A549 (cell line): ENCODE measurements at regions of chr10 and their contacts with region 1.

Region 1: DNA sequence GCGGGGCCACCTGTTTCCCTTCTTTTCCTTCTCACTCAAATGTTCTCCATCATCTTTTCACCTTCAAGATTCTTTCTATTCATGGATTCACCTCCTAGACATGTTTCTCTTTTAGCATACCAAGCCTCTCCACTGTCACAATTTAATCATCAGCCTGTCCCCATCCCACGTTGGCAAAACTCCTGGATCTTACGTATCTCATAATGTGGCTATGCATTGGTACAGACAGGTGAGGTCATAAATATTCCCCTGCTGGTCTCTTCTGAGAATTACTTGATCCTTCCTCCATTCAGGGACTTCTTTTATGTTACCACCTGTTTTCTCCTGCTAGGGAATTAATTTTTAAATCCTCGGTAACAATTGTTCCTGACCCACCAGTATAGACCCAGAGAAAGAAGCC is 262.6 kb upstream of the NEBL start:
- DNase-seq: no peak
- ATAC-seq: peak in 1 of 2 experiments; percentile 38; a peak in 1 of 6 replicates
- H3K4me3 ChIP-seq: no peak overlapping the region
- H3K27ac ChIP-seq: no peak overlapping the region
- H3K4me1 ChIP-seq: peaks cover 15% of the 10 kb centered on the region
- CTCF ChIP-seq: no peak
- EP300 ChIP-seq: no peak
- POLR2A ChIP-seq: no peak
- RAD21 ChIP-seq: no peak

Region 2: GRCh38 chr10:21055339-21056135 is 104.1 kb before region 1 on chr10:
- CTCF ChIA-PET with region 1: no interaction called
- POLR2A ChIA-PET with region 1: no interaction called
- DNase-seq: no peak
- ATAC-seq: no peak
- H3K4me3 ChIP-seq: no peak overlapping the region
- H3K27ac ChIP-seq: no peak overlapping the region
- H3K4me1 ChIP-seq: no peaks in the 10 kb centered on the region
- CTCF ChIP-seq: no peak
- EP300 ChIP-seq: no peak
- POLR2A ChIP-seq: no peak
- RAD21 ChIP-seq: no peak

Region 3: DNA sequence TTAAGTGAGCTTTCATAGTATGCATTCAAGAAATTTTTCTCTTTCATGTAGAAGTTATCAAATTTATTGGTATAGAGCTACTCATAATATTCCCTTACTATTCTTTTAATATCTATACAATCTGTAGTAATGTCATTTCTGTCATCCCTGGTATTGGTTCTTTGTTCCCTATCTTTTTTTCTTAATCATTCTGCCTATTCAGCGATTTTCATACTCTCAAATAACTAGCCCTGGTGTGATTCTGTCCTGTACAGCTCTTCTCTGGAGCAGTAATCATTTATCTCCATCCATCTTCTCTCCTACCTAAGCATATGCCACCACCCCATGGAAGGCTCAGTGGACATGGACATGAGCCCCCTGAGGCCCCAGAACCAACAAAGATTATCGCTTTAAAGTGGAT is 49.3 kb before region 1 on chr10:
- CTCF ChIA-PET with region 1: no interaction called
- POLR2A ChIA-PET with region 1: no interaction called
- DNase-seq: no peak
- ATAC-seq: no peak
- H3K4me3 ChIP-seq: no peak overlapping the region
- H3K27ac ChIP-seq: no peak overlapping the region
- H3K4me1 ChIP-seq: peaks cover 5% of the 10 kb centered on the region; the same call in 1 of the 3 replicates
- CTCF ChIP-seq: no peak
- EP300 ChIP-seq: no peak
- POLR2A ChIP-seq: no peak
- RAD21 ChIP-seq: no peak

Region 4: GRCh38 chr10:21173812-21174714 is 14.4 kb after region 1 on chr10:
- CTCF ChIA-PET with region 1: interaction called, 11 read pairs
- POLR2A ChIA-PET with region 1: no interaction called
- DNase-seq: peak; percentile 66 to 82
- ATAC-seq: peak; percentile 80 to 86
- H3K4me3 ChIP-seq: peak overlapping the region; percentile 79
- H3K27ac ChIP-seq: peak overlapping the region; percentile 92 to 94
- H3K4me1 ChIP-seq: peaks cover 29% of the 10 kb centered on the region
- CTCF ChIP-seq: peak; percentile 20; the same call in 2 of the 3 replicates
- EP300 ChIP-seq: peak in 1 of 2 experiments; percentile 25; a peak in 1 of 5 replicates
- POLR2A ChIP-seq: peak; percentile 10; the same call in 1 of the 2 replicates
- RAD21 ChIP-seq: peak; percentile 35 to 54